Activated CD4-positive, alpha-beta T cell treated with anti-CD3 and anti-CD28 coated beads, Interleukin-2, amount 10 ng/mL, durations not matched to agents 7 days and 5 days (primary cell): ENCODE measurements at regions of chr10 and their contacts with region 1.

Region 1: DNA sequence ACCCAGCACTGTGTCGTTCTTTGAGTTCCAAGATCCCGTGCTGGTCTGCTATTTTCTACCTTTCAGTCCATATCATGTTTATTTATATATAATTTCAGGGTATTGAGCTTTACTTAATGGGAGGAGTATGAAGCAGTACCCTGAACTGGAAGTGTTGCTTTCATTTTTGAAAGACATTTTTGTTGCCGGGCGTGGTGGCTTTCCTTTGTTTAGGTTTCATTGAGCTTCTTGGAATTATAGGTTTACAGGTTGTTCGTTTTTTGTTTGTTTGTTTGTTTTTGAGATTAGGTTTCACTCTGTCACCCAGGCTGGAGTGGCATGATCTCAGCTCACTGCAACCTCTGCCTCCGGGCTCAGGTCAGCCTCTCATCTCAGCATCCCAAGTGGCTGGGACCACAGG is 7.4 kb downstream of the ZNF487 start:
- DNase-seq: no peak
- H3K4me3 Mint-ChIP-seq: no peak overlapping the region
- H3K27ac Mint-ChIP-seq: peak overlapping the region; percentile 75
- H3K4me1 Mint-ChIP-seq: peaks cover 26% of the 10 kb centered on the region
- H3K27me3 Mint-ChIP-seq: no peaks in the 10 kb centered on the region

Region 2: DNA sequence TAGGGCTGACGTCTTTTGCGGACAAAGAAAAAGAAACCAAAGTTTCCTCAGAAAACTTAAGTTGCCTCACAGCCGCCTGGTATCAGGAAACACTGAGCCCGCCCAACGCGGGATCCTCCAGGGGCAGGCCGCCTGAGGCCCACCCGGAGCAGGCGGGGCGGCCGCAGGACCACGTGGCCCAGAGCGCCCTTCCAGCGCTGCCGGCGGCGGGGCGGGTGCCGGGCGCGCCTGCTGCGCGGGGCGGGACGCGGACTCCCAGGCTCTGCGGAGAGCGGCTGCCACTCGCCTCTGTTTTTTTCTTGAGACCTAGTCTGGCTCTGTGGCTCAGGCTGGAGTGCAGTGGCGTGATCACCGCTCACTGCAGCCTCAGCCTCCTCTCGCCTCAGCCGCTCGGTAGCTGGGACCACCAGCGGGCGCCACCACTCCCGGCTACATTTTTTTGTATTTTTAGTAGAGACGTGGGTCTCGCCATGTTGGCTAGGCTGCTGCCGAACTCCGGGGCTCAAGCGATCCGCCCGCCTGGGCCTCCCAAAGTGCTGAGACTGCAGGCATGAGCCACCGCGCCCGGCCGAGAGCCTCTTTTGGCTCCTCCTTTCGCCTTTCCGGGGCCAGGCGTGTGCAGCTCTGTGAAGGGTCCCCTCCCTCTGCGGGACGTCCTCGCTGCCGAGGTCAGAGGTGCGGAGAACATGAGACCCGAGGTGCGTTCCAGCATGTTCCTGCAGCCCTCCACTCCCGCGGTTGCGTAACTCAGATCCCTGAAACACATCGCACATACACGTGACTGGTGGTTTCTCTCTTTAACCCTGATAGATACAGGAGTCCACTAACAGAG is 23.7 kb before region 1 on chr10:
- CTCF ChIA-PET with region 1: no interaction called
- POLR2A ChIA-PET with region 1: interaction called, 10 read pairs
- DNase-seq: peak; percentile 87
- H3K4me3 Mint-ChIP-seq: peak overlapping the region; percentile 82
- H3K27ac Mint-ChIP-seq: peak overlapping the region; percentile 99
- H3K4me1 Mint-ChIP-seq: peaks cover 55% of the 10 kb centered on the region
- H3K27me3 Mint-ChIP-seq: no peaks in the 10 kb centered on the region

Region 3: GRCh38 chr10:43461950-43462349 is 17.6 kb after region 1 on chr10:
- CTCF ChIA-PET with region 1: no interaction called
- POLR2A ChIA-PET with region 1: no interaction called
- DNase-seq: peak; percentile 78
- H3K4me3 Mint-ChIP-seq: no peak overlapping the region
- H3K27ac Mint-ChIP-seq: no peak overlapping the region
- H3K4me1 Mint-ChIP-seq: peaks cover 19% of the 10 kb centered on the region
- H3K27me3 Mint-ChIP-seq: no peaks in the 10 kb centered on the region